AG04449 (cell line): ENCODE measurements at regions of chr9 and their contacts with region 1.

Region 1: GRCh38 chr9:129712634-129713401 is 40.0 kb downstream of the PTGES start:
- DNase-seq: peak; percentile 76
- H3K4me3 ChIP-seq: peak overlapping the region; percentile 2; the same call in 1 of the 2 replicates
- CTCF ChIP-seq: peak; percentile 1

Region 2: DNA sequence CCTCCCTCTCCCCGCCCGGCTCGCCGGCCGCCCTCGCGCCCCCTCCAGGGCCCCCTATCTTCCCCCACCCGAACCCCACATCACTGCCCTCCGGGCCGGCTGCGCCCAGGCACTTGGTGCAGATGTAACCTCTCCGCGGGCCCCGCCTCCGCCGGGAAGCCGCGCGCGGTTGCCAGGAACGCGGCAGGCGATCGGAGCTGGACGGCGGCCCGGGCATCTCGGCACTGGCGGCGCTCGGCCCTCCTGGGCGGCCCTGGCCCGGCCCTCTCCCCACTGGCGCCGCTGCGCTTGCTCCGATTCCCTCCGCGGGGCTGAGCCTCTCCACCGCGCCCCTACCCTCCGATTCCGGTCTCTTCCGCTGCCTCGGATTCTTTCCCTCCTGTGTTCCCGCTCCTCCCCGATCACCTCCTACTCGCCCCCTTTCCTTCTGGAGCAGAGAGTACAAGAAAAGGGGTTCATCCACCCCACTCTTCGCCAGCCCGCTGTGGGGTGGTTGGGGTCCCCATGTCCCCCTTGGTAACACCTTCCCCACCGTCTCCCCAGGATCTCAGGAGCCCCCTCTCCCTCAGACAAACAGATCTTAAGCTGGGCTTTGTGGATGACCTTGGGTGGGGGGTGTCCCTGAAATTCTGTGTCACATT is 162.5 kb before region 1 on chr9:
- CTCF ChIA-PET with region 1: no interaction called
- POLR2A ChIA-PET with region 1: no interaction called
- DNase-seq: no peak
- H3K4me3 ChIP-seq: peak overlapping the region; percentile 54
- CTCF ChIP-seq: no peak

Region 3: GRCh38 chr9:129696938-129697650 is 15.7 kb before region 1 on chr9:
- CTCF ChIA-PET with region 1: interaction called, 18 read pairs
- POLR2A ChIA-PET with region 1: interaction called, 17 read pairs
- DNase-seq: no peak
- H3K4me3 ChIP-seq: peak overlapping the region; percentile 49
- CTCF ChIP-seq: no peak